Heart right ventricle (tissue), 16 donors: ENCODE measurements at regions of chr1 and their contacts with region 1.

Region 1: DNA sequence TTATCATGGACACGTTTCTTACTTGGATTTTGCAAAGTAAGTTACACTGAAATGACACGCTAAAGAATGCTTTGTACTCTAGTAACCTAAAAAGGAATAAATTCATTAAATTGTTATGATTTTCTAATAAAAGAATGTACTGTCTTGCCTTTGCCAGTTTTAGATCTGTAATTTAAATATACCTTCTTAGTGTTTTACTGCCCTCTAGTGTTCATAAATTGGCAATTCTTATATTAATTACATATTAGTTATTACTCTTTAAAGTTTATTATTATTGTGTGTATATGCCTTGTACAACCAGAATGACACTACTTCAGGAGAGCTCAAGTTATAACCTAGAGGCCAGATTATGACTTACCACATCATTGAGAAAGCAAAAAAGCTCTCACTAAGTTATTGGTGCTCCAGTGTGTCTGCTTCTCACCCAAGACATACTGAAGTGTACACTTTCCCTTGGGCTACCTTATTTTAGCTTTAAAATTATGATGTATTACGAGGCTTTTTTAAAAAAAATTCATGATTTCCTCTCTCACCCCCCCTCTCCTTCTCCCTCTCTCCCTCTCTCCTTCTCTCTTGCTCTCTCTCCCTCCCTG is 169.9 kb downstream of the HS2ST1 start:
- DNase-seq: no peak
- ATAC-seq: peak in 3 of 8 donors; percentile 24 to 40 (median 29)
- H3K4me3 ChIP-seq: no peak overlapping the region
- H3K27ac ChIP-seq: no peak overlapping the region
- H3K4me1 ChIP-seq: peaks cover 0 to 11% (median 0%) of the 10 kb centered on the region in 9 donors
- H3K27me3 ChIP-seq: no peaks in the 10 kb centered on the region
- CTCF ChIP-seq: peak; percentile 50 to 81 (median 72)

Region 2: GRCh38 chr1:86380257-86380861 is 704.0 kb before region 1 on chr1:
- intact Hi-C with region 1: loop called in 2 of 10 experiments (anchors 10 kb)
- DNase-seq: no peak
- ATAC-seq: peak in 5 of 8 donors; percentile 58 to 77 (median 65)
- H3K4me3 ChIP-seq: peak overlapping the region in 4 of 10 donors; percentile 10 to 43 (median 22)
- H3K27ac ChIP-seq: peak overlapping the region in 1 of 10 donors; percentile 31
- H3K4me1 ChIP-seq: peaks cover 0 to 23% (median 0%) of the 10 kb centered on the region in 9 donors
- H3K27me3 ChIP-seq: no peaks in the 10 kb centered on the region
- CTCF ChIP-seq: peak; percentile 39 to 94 (median 82)

Region 3: DNA sequence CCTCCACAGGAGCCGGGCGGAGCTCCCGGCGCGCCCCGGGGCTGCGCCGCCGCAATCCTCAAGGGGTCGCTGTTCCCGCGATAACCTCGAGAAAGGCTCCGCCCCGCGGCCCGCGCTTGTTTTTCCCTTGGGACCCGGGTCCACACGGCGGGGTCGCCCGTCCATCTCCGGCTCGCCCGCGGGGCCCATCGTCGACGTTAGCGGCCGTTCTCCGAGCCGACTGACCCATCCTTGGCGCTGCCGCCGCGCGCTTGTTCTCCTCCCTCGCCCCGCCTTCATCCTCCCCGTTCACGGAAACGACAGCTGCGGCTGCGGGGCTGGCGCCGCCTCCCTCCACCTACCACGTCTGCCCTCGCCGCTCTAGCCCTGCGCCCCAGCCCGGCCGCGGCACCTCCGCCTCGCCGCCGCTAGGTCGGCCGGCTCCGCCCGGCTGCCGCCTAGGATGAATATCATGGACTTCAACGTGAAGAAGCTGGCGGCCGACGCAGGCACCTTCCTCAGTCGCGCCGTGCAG is 379.8 kb before region 1 on chr1 and contains the start of gene SH3GLB1:
- intact Hi-C with region 1: loop called in 1 of 10 experiments (anchors 10 kb)
- DNase-seq: peak; percentile 88 to 92
- ATAC-seq: peak; percentile 92 to 97 (median 93)
- H3K4me3 ChIP-seq: peak within 1 kb of the TSS; percentile 72 to 98 (median 88)
- H3K27ac ChIP-seq: peak within 1 kb of the TSS; percentile 94 to 100 (median 99)
- H3K4me1 ChIP-seq: peaks cover 4 to 50% (median 47%) of the 10 kb centered on the region in 9 donors
- H3K27me3 ChIP-seq: no peaks in the 10 kb centered on the region
- CTCF ChIP-seq: peak; percentile 92 to 99 (median 96)
- total RNA-seq, gene SH3GLB1: 101 to 160 (median 126) TPM

Region 4: GRCh38 chr1:86774305-86775295 is 309.7 kb before region 1 on chr1:
- intact Hi-C with region 1: loop called in 1 of 10 experiments (anchors 5 kb)
- DNase-seq: peak; percentile 29 to 71
- ATAC-seq: peak; percentile 89 to 97 (median 94)
- H3K4me3 ChIP-seq: peak overlapping the region in 1 of 10 donors; percentile 30
- H3K27ac ChIP-seq: peak overlapping the region in 8 of 10 donors; percentile 25 to 88 (median 66)
- H3K4me1 ChIP-seq: peaks cover 0 to 52% (median 21%) of the 10 kb centered on the region in 9 donors
- H3K27me3 ChIP-seq: no peaks in the 10 kb centered on the region
- CTCF ChIP-seq: no peak

Region 5: GRCh38 chr1:86833461-86834215 is 250.7 kb before region 1 on chr1:
- intact Hi-C with region 1: loop called (anchors 1 to 5 kb)
- DNase-seq: peak; percentile 19 to 76
- ATAC-seq: peak; percentile 67 to 93 (median 80)
- H3K4me3 ChIP-seq: no peak overlapping the region
- H3K27ac ChIP-seq: no peak overlapping the region
- H3K4me1 ChIP-seq: peaks cover 0 to 4% (median 0%) of the 10 kb centered on the region in 9 donors
- H3K27me3 ChIP-seq: no peaks in the 10 kb centered on the region
- CTCF ChIP-seq: peak; percentile 39 to 74 (median 66)

Region 6: GRCh38 chr1:86875722-86876121 is 208.6 kb before region 1 on chr1:
- intact Hi-C with region 1: no loop called
- DNase-seq: no peak
- ATAC-seq: no peak
- H3K4me3 ChIP-seq: no peak overlapping the region
- H3K27ac ChIP-seq: no peak overlapping the region
- H3K4me1 ChIP-seq: no peaks in the 10 kb centered on the region
- H3K27me3 ChIP-seq: no peaks in the 10 kb centered on the region
- CTCF ChIP-seq: no peak

Region 7: GRCh38 chr1:86887479-86888162 is 196.7 kb before region 1 on chr1:
- intact Hi-C with region 1: no loop called
- DNase-seq: no peak
- ATAC-seq: no peak
- H3K4me3 ChIP-seq: no peak overlapping the region
- H3K27ac ChIP-seq: no peak overlapping the region
- H3K4me1 ChIP-seq: peaks cover 0 to 14% (median 0%) of the 10 kb centered on the region in 9 donors
- H3K27me3 ChIP-seq: no peaks in the 10 kb centered on the region
- CTCF ChIP-seq: no peak

Region 8: GRCh38 chr1:86933562-86934377 is 150.6 kb before region 1 on chr1:
- intact Hi-C with region 1: no loop called
- DNase-seq: no peak
- ATAC-seq: peak in 3 of 8 donors; percentile 47 to 49 (median 48)
- H3K4me3 ChIP-seq: no peak overlapping the region
- H3K27ac ChIP-seq: peak overlapping the region in 2 of 10 donors; percentile 1 to 8
- H3K4me1 ChIP-seq: peaks cover 0 to 5% (median 0%) of the 10 kb centered on the region in 9 donors
- H3K27me3 ChIP-seq: no peaks in the 10 kb centered on the region
- CTCF ChIP-seq: no peak

Region 9: GRCh38 chr1:86965012-86965826 is 119.1 kb before region 1 on chr1:
- intact Hi-C with region 1: loop called in 3 of 10 experiments (anchors 10 kb)
- DNase-seq: peak in 1 of 2 donors; percentile 19
- ATAC-seq: peak in 2 of 8 donors; percentile 14 to 65
- H3K4me3 ChIP-seq: no peak overlapping the region
- H3K27ac ChIP-seq: no peak overlapping the region
- H3K4me1 ChIP-seq: peaks cover 0 to 3% (median 0%) of the 10 kb centered on the region in 9 donors
- H3K27me3 ChIP-seq: no peaks in the 10 kb centered on the region
- CTCF ChIP-seq: peak; percentile 24 to 74 (median 62)

Region 10: GRCh38 chr1:86972262-86972661 is 112.1 kb before region 1 on chr1:
- intact Hi-C with region 1: loop called in 3 of 10 experiments (anchors 10 kb)
- DNase-seq: no peak
- ATAC-seq: no peak
- H3K4me3 ChIP-seq: no peak overlapping the region
- H3K27ac ChIP-seq: no peak overlapping the region
- H3K4me1 ChIP-seq: peaks cover 0 to 16% (median 0%) of the 10 kb centered on the region in 9 donors
- H3K27me3 ChIP-seq: no peaks in the 10 kb centered on the region
- CTCF ChIP-seq: no peak